GM13976 (cell line): ENCODE measurements at regions of chr9 and their contacts with region 1.

Region 1: GRCh38 chr9:84404095-84404686 is 63.6 kb upstream of the SLC28A3 start:
- DNase-seq: peak; percentile 65
- CTCF ChIP-seq: peak; percentile 84

Region 2: DNA sequence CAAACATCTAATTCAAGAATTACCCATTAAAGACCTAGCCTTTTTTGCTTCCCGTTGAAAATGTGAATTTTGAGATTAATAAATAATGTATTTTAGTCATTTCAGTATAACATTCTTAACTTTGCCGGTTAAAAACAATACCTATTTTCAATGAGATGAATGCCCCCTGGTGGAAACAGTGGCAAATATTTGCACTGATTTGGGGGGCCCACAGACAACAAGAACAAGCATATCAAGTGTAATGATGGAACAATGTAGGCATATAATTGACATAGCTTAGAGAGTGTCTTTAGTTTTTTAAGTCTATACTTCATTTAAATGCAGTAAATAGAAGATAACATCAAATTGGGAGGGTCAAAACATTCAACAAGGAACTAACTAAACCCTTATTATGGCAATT is 377.3 kb after region 1 on chr9:
- in situ Hi-C with region 1: loop called (anchors 25 kb)
- DNase-seq: peak; percentile 11
- CTCF ChIP-seq: peak; percentile 2

Region 3: GRCh38 chr9:84953797-84954705 is 549.9 kb after region 1 on chr9:
- in situ Hi-C with region 1: loop called (anchors 25 kb)
- DNase-seq: peak; percentile 87
- CTCF ChIP-seq: peak; percentile 92

Region 4: GRCh38 chr9:85142968-85143367 is 738.8 kb after region 1 on chr9:
- in situ Hi-C with region 1: loop called (anchors 25 kb)
- DNase-seq: peak; percentile 45
- CTCF ChIP-seq: peak; percentile 46